ENCODE measurements at regions of chr17 and their contacts with region 1.

Region 1: GRCh38 chr17:7454980-7455379 is 10.1 kb downstream of the CHRNB1 start:
- DNase-seq: no peak
- H3K4me3 ChIP-seq: peak overlapping the region in 5 of 7 experiments; percentile 87 to 99 (median 95)
- H3K27ac ChIP-seq: no peak overlapping the region
- H3K4me1 ChIP-seq: peaks cover 0 to 17% (median 9%) of the 10 kb centered on the region in 4 experiments
- H3K27me3 ChIP-seq: no peaks in the 10 kb centered on the region

Region 2: GRCh38 chr17:7383742-7384488 is 71.1 kb before region 1 on chr17:
- CTCF ChIA-PET with region 1: no interaction called
- POLR2A ChIA-PET with region 1: no interaction called
- DNase-seq: peak; percentile 53 to 76 (median 70)
- H3K4me3 ChIP-seq: peak overlapping the region; percentile 48 to 81 (median 57)
- H3K27ac ChIP-seq: no peak overlapping the region
- H3K4me1 ChIP-seq: peaks cover 0 to 31% (median 18%) of the 10 kb centered on the region in 4 experiments
- H3K27me3 ChIP-seq: peaks cover 2 to 38% (median 23%) of the 10 kb centered on the region in 5 experiments

Region 3: DNA sequence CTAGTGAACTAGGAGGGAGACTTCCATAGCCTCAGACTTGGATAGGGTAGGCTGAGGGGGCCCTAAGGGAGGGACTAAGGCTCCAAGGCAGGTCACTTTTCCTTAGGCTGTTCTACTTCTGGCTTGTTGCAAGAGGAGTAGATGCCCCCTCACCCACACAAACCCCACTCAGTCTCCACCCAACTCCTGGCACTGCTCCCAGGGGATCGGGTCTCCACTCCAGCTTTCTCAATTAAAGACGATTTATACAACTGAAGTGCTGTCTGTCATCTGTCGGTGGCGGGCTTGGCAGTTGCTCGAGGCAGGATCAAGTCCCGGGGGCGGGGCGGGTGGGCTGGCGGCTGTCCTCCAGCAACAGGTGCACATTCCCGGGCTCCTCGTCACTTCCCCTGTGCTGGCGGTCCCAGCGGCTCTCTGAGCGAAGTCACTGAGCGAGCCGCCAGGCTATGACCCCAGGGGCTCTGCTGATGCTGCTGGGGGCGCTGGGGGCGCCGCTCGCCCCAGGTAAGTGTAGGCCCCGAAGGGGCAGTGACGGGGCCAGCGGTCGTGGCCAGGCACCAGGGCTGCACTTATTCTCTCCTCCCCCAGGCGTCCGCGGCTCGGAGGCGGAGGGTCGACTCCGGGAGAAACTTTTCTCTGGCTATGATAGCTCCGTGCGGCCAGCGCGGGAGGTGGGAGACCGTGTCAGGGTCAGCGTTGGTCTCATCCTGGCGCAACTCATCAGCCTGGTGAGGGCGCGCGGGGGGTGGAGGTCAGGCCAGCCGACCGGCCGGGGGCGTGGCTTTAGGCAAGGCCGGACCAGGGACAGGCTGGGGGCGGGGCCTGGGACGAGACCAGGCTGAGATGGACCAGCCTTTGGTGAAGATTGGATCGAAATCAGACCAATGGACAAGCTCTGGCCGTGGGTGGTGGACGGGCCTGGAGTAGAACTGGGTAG is 10.0 kb before region 1 on chr17 and contains the start of gene CHRNB1:
- CTCF ChIA-PET with region 1: interaction called, 40 read pairs
- POLR2A ChIA-PET with region 1: interaction called, 5 read pairs
- DNase-seq: peak in 2 of 3 donors; percentile 64 to 72
- H3K4me3 ChIP-seq: peak within 1 kb of the TSS; percentile 23 to 74 (median 61)
- H3K27ac ChIP-seq: no peak within 1 kb of the TSS
- H3K4me1 ChIP-seq: peaks cover 3 to 32% (median 29%) of the 10 kb centered on the region in 4 experiments
- H3K27me3 ChIP-seq: peaks cover 4 to 73% (median 37%) of the 10 kb centered on the region in 5 experiments

Region 4: GRCh38 chr17:7484067-7484918 is 29.3 kb after region 1 on chr17 and contains the start of gene POLR2A:
- CTCF ChIA-PET with region 1: interaction called, 5 read pairs
- POLR2A ChIA-PET with region 1: interaction called, 19 read pairs
- DNase-seq: peak; percentile 97 to 99 (median 98)
- H3K4me3 ChIP-seq: peak within 1 kb of the TSS; percentile 59 to 97 (median 84)
- H3K27ac ChIP-seq: peak within 1 kb of the TSS; percentile 99 to 100
- H3K4me1 ChIP-seq: peaks cover 12 to 60% (median 46%) of the 10 kb centered on the region in 4 experiments
- H3K27me3 ChIP-seq: no peaks in the 10 kb centered on the region

Measured in common myeloid progenitor, CD34-positive (primary cell).